ENCODE measurements at regions of chr4 and their contacts with region 1.

Region 1: DNA sequence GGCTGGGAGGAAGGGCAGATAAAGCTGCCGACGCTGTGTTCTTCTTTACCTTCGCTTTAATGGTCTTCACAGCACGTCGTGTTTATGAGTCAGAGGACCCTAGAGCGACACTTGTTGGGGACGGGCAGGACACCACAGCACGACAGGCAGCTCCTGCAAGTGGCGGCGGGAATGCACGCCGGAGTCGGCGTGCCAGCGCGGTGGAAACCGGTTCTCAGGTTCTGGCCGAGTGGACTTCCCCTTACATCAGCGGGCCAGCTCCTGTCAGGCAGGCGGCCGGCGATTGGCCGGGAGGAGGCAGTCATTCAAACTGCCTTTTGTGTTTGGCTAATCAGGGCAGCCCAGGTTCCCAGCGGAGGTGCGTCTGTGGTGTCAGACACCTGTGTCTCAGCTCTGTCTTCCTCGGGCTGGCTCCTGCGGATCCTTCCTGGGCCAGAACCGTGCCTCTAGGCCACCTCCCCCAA is 150.9 kb downstream of the SHROOM3 start:
- DNase-seq: peak; percentile 89
- H3K4me3 Mint-ChIP-seq: peak overlapping the region; percentile 77
- H3K27ac Mint-ChIP-seq: peak overlapping the region; percentile 50
- H3K4me1 Mint-ChIP-seq: peaks cover 37% of the 10 kb centered on the region
- H3K27me3 Mint-ChIP-seq: no peaks in the 10 kb centered on the region
- CTCF ChIP-seq: no peak

Region 2: GRCh38 chr4:76546282-76547171 is 39.4 kb before region 1 on chr4:
- CTCF ChIA-PET with region 1: interaction called, 4 read pairs
- intact Hi-C with region 1: loop called (anchors 2 kb)
- DNase-seq: peak; percentile 49
- H3K4me3 Mint-ChIP-seq: peak overlapping the region; percentile 26
- H3K27ac Mint-ChIP-seq: peak overlapping the region; percentile 91
- H3K4me1 Mint-ChIP-seq: peaks cover 54% of the 10 kb centered on the region
- H3K27me3 Mint-ChIP-seq: no peaks in the 10 kb centered on the region
- CTCF ChIP-seq: no peak